CD4-positive, alpha-beta memory T cell (primary cell): ENCODE measurements at regions of chr11 and their contacts with region 1.

Region 1: GRCh38 chr11:11966826-11967668 is 41.4 kb downstream of the DKK3 start:
- DNase-seq: peak; percentile 47 to 64 (median 60)
- H3K4me3 ChIP-seq: no peak overlapping the region
- H3K4me3 Mint-ChIP-seq: no peak overlapping the region
- H3K27ac ChIP-seq: no peak overlapping the region
- H3K27ac Mint-ChIP-seq: no peak overlapping the region
- H3K4me1 ChIP-seq: peaks cover 5% of the 10 kb centered on the region
- H3K4me1 Mint-ChIP-seq: peaks cover 4 to 15% (median 10%) of the 10 kb centered on the region in 4 donors
- H3K27me3 ChIP-seq: no peaks in the 10 kb centered on the region
- H3K27me3 Mint-ChIP-seq: peaks cover 0 to 1% of the 10 kb centered on the region in 2 donors

Region 2: GRCh38 chr11:11946180-11946579 is 20.9 kb before region 1 on chr11:
- CTCF ChIA-PET with region 1: interaction called, 11 read pairs
- POLR2A ChIA-PET with region 1: no interaction called
- intact Hi-C with region 1: no loop called
- DNase-seq: no peak
- H3K4me3 ChIP-seq: no peak overlapping the region
- H3K4me3 Mint-ChIP-seq: no peak overlapping the region
- H3K27ac ChIP-seq: no peak overlapping the region
- H3K27ac Mint-ChIP-seq: peak overlapping the region in 3 of 7 donors; percentile 35 to 57 (median 35)
- H3K4me1 ChIP-seq: no peaks in the 10 kb centered on the region
- H3K4me1 Mint-ChIP-seq: peaks cover 0 to 5% (median 1%) of the 10 kb centered on the region in 4 donors
- H3K27me3 ChIP-seq: no peaks in the 10 kb centered on the region
- H3K27me3 Mint-ChIP-seq: no peaks in the 10 kb centered on the region

Region 3: DNA sequence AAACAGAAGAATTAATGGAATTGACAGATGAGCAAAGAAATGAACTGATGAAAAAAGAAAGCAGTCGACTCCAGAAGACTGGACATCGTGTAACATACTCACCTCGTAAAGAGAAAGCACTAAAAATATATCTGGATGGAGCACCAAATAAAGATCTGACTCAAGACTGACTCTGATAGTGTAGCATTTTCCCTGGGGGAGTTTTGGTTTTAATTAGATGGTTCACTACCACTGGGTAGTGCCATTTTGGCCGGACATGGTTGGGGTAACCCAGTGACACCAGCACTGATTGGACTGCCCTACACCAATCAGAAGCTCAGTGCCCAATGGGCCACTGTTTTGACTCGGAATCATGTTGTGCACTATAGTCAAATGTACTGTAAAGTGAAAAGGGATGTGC is 11.0 kb before region 1 on chr11:
- CTCF ChIA-PET with region 1: interaction called, 13 read pairs
- POLR2A ChIA-PET with region 1: interaction called, 3 read pairs
- intact Hi-C with region 1: no loop called
- DNase-seq: no peak
- H3K4me3 ChIP-seq: no peak overlapping the region
- H3K4me3 Mint-ChIP-seq: no peak overlapping the region
- H3K27ac ChIP-seq: no peak overlapping the region
- H3K27ac Mint-ChIP-seq: peak overlapping the region in 2 of 7 donors; percentile 12 to 63
- H3K4me1 ChIP-seq: peaks cover 26% of the 10 kb centered on the region
- H3K4me1 Mint-ChIP-seq: peaks cover 26 to 29% (median 27%) of the 10 kb centered on the region in 4 donors
- H3K27me3 ChIP-seq: no peaks in the 10 kb centered on the region
- H3K27me3 Mint-ChIP-seq: no peaks in the 10 kb centered on the region

Region 4: DNA sequence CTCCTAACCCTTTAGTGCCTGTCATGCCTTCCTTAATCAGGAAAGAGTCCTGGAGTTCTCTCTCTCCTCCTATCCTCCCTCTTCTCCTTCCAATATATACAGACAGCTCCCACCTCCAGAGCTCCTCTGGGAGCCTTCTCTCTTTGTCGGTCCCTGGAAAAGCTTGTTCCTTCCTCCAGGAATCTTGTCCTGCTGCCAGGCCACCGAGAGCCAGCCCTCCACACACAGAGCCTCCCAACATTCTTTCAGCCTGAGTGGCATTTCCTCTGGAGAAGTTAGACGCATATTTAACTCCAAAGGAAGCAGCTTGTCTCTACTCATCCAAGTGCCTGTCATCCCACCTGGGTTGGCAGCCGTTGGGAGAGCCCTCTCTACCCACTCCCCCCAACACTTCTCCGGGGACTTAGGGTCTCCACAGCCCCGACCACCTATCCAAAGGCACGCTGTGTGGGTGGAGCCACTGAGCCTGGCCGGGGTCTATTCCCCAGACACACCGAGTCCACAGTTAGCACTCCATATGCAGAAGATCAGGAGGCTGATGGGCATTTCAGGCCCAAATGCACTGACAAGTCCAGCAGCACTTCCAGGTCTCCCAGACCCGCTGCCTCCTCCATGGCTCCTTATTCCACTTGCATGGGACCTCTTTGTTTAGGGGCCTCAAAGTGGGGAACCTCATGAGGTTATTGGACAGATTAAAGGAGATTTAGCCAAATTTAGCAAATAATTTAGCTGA is 10.3 kb after region 1 on chr11:
- CTCF ChIA-PET with region 1: interaction called, 27 read pairs
- POLR2A ChIA-PET with region 1: interaction called, 3 read pairs
- intact Hi-C with region 1: no loop called
- DNase-seq: no peak
- H3K4me3 ChIP-seq: no peak overlapping the region
- H3K4me3 Mint-ChIP-seq: no peak overlapping the region
- H3K27ac ChIP-seq: no peak overlapping the region
- H3K27ac Mint-ChIP-seq: no peak overlapping the region
- H3K4me1 ChIP-seq: peaks cover 11% of the 10 kb centered on the region
- H3K4me1 Mint-ChIP-seq: peaks cover 4 to 21% (median 14%) of the 10 kb centered on the region in 4 donors
- H3K27me3 ChIP-seq: no peaks in the 10 kb centered on the region
- H3K27me3 Mint-ChIP-seq: peaks cover 1 to 2% of the 10 kb centered on the region in 2 donors